ENCODE measurements at regions of chr3 and their contacts with region 1.

Region 1: DNA sequence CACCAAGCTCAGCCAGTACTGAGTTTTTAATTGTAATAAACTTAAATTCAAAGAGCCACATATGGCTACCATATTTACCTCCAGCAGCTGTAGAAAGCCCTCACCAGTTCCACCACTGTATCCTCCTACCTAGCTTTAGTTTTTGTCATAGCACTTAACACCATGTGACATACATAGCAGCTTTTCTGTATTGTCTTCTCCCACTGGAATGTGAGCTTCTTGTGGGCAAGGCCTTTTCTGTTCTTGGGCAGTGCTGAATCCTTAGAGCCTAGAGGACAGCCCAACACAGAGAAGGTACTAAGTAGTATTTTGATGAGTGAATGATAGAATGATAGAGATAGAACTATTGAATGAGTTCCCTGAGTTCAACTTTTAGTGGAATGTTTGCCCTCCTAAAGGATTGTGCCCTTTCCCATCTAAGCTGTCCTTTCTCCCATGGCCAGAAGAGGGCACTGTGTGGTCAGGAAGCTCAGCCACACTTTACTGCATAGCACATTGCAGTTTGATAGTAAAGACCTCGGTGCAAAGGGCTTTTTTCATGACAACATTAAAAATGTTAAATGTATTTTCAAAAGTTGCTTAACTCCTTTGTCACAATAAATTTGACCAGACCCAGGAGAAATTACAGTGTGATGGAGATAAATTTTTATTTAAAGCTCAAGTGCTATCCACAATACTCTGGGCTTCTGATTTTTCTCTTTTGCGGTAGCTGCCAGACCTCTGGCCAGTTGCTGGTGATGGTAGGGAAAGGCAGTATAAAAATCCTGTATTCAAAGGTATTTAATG is 115.8 kb downstream of the GHSR start:
- DNase-seq: no peak
- ATAC-seq: peak; percentile 94
- H3K4me3 ChIP-seq: no peak overlapping the region
- H3K27ac ChIP-seq: no peak overlapping the region
- H3K4me1 ChIP-seq: no peaks in the 10 kb centered on the region
- H3K27me3 ChIP-seq: no peaks in the 10 kb centered on the region
- CTCF ChIP-seq: peak; percentile 71 to 96 (median 92)
- POLR2A ChIP-seq: no peak
- RAD21 ChIP-seq: peak; percentile 78

Region 2: GRCh38 chr3:172039436-172040077 is 292.9 kb before region 1 on chr3 and contains the start of gene FNDC3B:
- CTCF ChIA-PET with region 1: interaction called, 4 read pairs
- POLR2A ChIA-PET with region 1: no interaction called
- RAD21 ChIA-PET with region 1: no interaction called
- intact Hi-C with region 1: loop called (anchors 10 kb)
- DNase-seq: peak; percentile 86
- ATAC-seq: peak; percentile 71
- H3K4me3 ChIP-seq: peak within 1 kb of the TSS; percentile 74 to 94
- H3K27ac ChIP-seq: peak within 1 kb of the TSS; percentile 90
- H3K4me1 ChIP-seq: peaks cover 8 to 32% of the 10 kb centered on the region in 2 experiments
- H3K27me3 ChIP-seq: no peaks in the 10 kb centered on the region
- CTCF ChIP-seq: no peak
- POLR2A ChIP-seq: peak; percentile 60
- RAD21 ChIP-seq: no peak; the same call in none of the 2 replicates
- total RNA-seq, gene FNDC3B: 45.7 TPM

Region 3: DNA sequence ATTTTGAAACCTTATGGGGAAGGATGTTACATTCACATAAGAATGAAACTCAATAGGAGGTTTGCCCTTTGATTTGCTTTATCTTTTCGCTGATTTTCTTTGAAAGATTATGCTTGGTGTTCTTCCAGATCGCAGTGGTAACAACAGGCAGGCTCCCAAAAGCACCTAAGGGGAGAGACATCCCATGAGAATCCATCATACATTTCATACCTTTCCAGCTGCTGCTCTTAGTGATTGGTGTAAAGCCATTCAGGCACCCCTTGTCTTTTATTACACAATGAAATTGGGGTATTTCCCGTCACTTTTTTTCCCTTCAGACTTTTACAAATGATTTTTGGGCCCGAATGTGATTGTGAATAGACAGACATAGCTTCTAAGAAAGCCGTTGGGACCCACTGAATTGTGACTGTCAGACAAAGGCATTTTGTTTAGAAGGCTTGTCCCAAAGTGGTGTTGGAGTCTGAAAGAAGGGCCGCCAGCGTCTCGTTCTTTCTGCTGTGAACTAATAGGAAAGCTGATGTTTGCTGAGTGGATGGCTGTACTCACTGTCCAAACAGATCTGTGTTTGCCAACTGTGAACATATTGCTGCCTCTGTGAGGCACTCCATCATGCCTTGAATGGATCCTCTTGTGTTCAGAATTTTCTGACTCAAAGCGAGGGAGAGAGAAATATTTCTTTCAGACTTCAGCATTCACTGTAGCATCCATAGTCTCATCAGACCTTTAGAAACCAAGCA is 128.8 kb before region 1 on chr3:
- CTCF ChIA-PET with region 1: no interaction called
- POLR2A ChIA-PET with region 1: no interaction called
- RAD21 ChIA-PET with region 1: no interaction called
- intact Hi-C with region 1: no loop called
- DNase-seq: no peak
- ATAC-seq: no peak
- H3K4me3 ChIP-seq: no peak overlapping the region
- H3K27ac ChIP-seq: no peak overlapping the region
- H3K4me1 ChIP-seq: peaks cover 2 to 3% of the 10 kb centered on the region in 2 experiments; a peak in 1 of 4 replicates
- H3K27me3 ChIP-seq: no peaks in the 10 kb centered on the region
- CTCF ChIP-seq: no peak
- POLR2A ChIP-seq: no peak
- RAD21 ChIP-seq: no peak

Region 4: GRCh38 chr3:172317984-172318383 is 14.5 kb before region 1 on chr3:
- CTCF ChIA-PET with region 1: interaction called, 13 read pairs
- POLR2A ChIA-PET with region 1: no interaction called
- RAD21 ChIA-PET with region 1: no interaction called
- intact Hi-C with region 1: no loop called
- DNase-seq: peak; percentile 46
- ATAC-seq: peak; percentile 68
- H3K4me3 ChIP-seq: peak overlapping the region in 1 of 2 experiments; percentile 7; a peak in 1 of 4 replicates
- H3K27ac ChIP-seq: peak overlapping the region; percentile 3; the same call in 1 of the 2 replicates
- H3K4me1 ChIP-seq: peaks cover 33 to 34% of the 10 kb centered on the region in 2 experiments
- H3K27me3 ChIP-seq: no peaks in the 10 kb centered on the region
- CTCF ChIP-seq: no peak
- POLR2A ChIP-seq: no peak
- RAD21 ChIP-seq: no peak

Region 5: GRCh38 chr3:172347895-172348680 is 15.6 kb after region 1 on chr3:
- CTCF ChIA-PET with region 1: interaction called, 11 read pairs
- POLR2A ChIA-PET with region 1: no interaction called
- RAD21 ChIA-PET with region 1: no interaction called
- intact Hi-C with region 1: no loop called
- DNase-seq: peak; percentile 16
- ATAC-seq: peak; percentile 72
- H3K4me3 ChIP-seq: peak overlapping the region in 1 of 2 experiments; percentile 1; a peak in 1 of 4 replicates
- H3K27ac ChIP-seq: peak overlapping the region; percentile 58; the same call in 1 of the 2 replicates
- H3K4me1 ChIP-seq: peaks cover 19 to 22% of the 10 kb centered on the region in 2 experiments
- H3K27me3 ChIP-seq: no peaks in the 10 kb centered on the region
- CTCF ChIP-seq: no peak
- POLR2A ChIP-seq: no peak
- RAD21 ChIP-seq: no peak

Region 6: DNA sequence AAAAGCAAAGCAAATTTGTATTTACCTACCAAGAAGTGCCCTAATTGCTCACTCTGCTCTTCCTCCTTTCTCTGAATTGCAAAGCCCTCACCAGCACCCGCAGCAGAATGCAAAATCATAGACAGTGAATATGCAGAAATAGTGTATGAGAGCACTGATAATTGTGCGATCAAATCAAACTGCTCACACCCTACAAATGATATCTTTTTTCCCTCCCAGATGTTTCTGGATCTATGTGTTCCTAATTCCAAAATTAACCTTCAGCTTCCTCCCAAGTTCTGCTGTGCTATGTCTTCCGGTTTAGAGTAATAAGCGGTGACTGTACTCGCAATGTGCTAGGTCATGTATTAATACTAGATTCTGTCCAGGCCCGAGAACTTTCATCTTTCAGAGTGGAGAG is 112.4 kb after region 1 on chr3:
- CTCF ChIA-PET with region 1: no interaction called
- POLR2A ChIA-PET with region 1: no interaction called
- RAD21 ChIA-PET with region 1: no interaction called
- intact Hi-C with region 1: no loop called
- DNase-seq: no peak
- ATAC-seq: no peak
- H3K4me3 ChIP-seq: no peak overlapping the region
- H3K27ac ChIP-seq: no peak overlapping the region
- H3K4me1 ChIP-seq: no peaks in the 10 kb centered on the region
- H3K27me3 ChIP-seq: no peaks in the 10 kb centered on the region
- CTCF ChIP-seq: no peak
- POLR2A ChIP-seq: no peak
- RAD21 ChIP-seq: no peak

Region 7: GRCh38 chr3:172476347-172476746 is 143.9 kb after region 1 on chr3:
- CTCF ChIA-PET with region 1: interaction called, 19 read pairs
- POLR2A ChIA-PET with region 1: no interaction called
- RAD21 ChIA-PET with region 1: interaction called, 4 to 11 read pairs
- intact Hi-C with region 1: loop called (anchors 1 kb)
- DNase-seq: no peak
- ATAC-seq: no peak
- H3K4me3 ChIP-seq: peak overlapping the region in 1 of 2 experiments; percentile 67; a peak in 1 of 4 replicates
- H3K27ac ChIP-seq: no peak overlapping the region
- H3K4me1 ChIP-seq: peaks cover 6 to 14% of the 10 kb centered on the region in 2 experiments; a peak in 3 of 4 replicates
- H3K27me3 ChIP-seq: no peaks in the 10 kb centered on the region
- CTCF ChIP-seq: no peak
- POLR2A ChIP-seq: no peak
- RAD21 ChIP-seq: no peak

Region 8: DNA sequence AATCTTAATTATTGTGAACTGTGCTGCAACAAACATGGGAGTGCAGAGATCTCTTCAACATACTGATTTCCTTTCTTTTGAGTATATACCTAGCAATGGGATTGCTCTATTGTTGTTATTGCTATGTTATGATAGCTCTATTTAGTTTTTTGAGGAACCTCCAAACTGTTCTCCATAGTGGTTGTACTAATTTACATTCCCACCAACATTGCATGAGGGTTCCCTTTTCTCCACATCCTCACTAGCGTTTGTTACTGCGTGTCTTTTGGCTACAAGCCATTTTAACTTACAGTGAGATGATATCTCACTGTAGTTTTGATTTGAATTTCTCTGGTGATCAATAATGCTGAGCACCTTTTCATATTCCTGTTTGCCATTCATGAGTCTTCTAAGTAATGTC is 236.3 kb after region 1 on chr3:
- CTCF ChIA-PET with region 1: no interaction called
- POLR2A ChIA-PET with region 1: no interaction called
- RAD21 ChIA-PET with region 1: no interaction called
- intact Hi-C with region 1: no loop called
- DNase-seq: no peak
- ATAC-seq: no peak
- H3K4me3 ChIP-seq: no peak overlapping the region
- H3K27ac ChIP-seq: no peak overlapping the region
- H3K4me1 ChIP-seq: peaks cover 5% of the 10 kb centered on the region in 2 experiments; a peak in 3 of 4 replicates
- H3K27me3 ChIP-seq: no peaks in the 10 kb centered on the region
- CTCF ChIP-seq: no peak
- POLR2A ChIP-seq: no peak
- RAD21 ChIP-seq: no peak

Region 9: DNA sequence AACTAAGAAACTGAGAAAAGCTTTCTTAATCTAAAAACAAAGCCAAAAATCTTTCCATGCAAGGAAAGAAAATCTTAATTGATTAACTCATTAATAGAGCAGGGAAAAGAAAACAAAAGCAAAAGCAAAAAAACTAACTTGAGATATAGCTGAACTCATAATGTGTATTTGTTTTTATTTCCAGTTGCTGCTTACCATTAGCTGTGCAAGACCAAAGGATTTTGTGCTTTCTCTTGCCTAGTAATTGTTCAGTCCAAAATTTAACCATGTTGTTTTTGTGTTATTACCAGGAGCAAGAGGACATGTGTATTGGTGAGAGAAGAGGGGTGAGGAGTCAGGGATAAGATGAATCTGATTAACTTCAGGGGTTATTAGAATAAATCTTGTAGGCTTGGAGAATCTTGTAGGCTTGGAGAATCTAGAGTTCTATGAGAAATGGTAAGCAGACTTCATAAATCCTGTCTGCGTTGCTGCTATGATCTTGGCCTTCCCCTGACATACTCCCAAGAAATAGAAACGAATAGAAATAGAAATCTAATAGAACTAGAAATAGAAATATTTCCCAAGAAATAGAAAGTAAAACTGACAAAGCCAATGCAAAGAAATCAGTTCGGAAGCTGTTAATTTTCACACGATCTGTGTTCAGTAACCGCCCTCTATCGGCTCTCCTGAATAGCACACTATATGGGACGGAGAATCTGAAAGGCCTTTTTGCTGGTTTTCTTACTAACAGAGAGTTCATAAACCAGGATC is 263.4 kb after region 1 on chr3:
- CTCF ChIA-PET with region 1: interaction called, 14 read pairs
- POLR2A ChIA-PET with region 1: no interaction called
- RAD21 ChIA-PET with region 1: no interaction called
- intact Hi-C with region 1: no loop called
- DNase-seq: peak; percentile 48
- ATAC-seq: peak; percentile 92
- H3K4me3 ChIP-seq: peak overlapping the region; percentile 9 to 19; a peak in 2 of 4 replicates
- H3K27ac ChIP-seq: no peak overlapping the region
- H3K4me1 ChIP-seq: 0 out of 4 replicates have a peak, but pooled peaks cover 0 to 4% of the 10 kb centered on the region in 2 experiments
- H3K27me3 ChIP-seq: no peaks in the 10 kb centered on the region
- CTCF ChIP-seq: peak; percentile 78 to 88 (median 87)
- POLR2A ChIP-seq: no peak
- RAD21 ChIP-seq: peak; percentile 91

Region 10: GRCh38 chr3:172666873-172667694 is 334.6 kb after region 1 on chr3:
- CTCF ChIA-PET with region 1: interaction called, 22 read pairs
- POLR2A ChIA-PET with region 1: no interaction called
- RAD21 ChIA-PET with region 1: no interaction called
- intact Hi-C with region 1: loop called (anchors 1 kb)
- DNase-seq: peak; percentile 67
- ATAC-seq: peak; percentile 100
- H3K4me3 ChIP-seq: no peak overlapping the region
- H3K27ac ChIP-seq: no peak overlapping the region
- H3K4me1 ChIP-seq: peaks cover 0 to 9% of the 10 kb centered on the region in 2 experiments; a peak in 1 of 4 replicates
- H3K27me3 ChIP-seq: no peaks in the 10 kb centered on the region
- CTCF ChIP-seq: peak; percentile 79 to 90 (median 85)
- POLR2A ChIP-seq: no peak
- RAD21 ChIP-seq: peak; percentile 94

Measured in HCT116 (cell line).